ENCODE measurements at regions of chr12 and their contacts with region 1.

Region 1: DNA sequence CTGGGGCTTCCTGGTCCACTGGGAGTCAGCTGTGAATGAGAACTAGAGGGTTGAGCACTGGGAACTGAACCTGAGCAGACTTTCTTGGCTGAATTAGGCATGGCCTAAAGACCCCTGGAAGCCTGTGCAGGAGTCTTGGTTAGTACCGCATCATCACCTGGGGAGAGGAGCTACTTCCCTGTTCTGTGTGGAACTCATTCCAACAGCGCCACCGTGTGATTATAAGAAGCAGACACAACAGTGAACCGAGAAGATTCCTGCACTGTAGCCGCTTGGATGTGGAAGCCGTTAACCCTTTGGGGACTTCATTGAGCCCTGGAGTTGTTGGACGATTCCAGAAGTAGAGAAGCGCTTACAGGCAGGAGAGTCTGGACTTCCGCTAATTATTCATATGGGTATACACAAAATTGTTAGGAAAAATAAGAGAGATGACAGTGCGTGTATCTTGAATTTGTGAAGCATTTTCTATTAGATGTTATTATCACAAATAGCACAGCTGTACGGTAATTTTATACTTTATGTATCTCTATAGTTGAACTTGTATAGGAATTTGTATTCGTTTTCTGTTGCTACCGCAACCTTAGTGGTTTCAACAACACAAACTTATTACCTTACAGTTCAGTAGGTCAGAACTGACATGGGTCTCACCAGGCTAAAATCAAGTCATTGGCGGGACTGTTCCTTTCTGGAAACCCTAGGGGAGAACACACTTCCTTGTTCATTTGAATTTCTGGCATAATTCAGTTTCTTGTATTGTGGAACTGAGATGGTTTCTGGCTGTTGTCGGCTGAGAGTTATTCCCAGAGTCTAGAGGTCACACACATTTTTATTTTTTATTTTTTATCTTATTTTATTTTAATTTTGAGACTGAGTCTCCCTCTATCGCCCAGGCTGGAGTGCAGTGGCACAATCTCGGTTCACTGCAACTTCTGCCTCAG is 100.7 kb downstream of the C2CD5 start:
- DNase-seq: peak; percentile 50
- CTCF ChIP-seq: peak; percentile 84

Region 2: GRCh38 chr12:21697904-21698630 is 745.6 kb before region 1 on chr12:
- in situ Hi-C with region 1: loop called (anchors 25 kb)
- DNase-seq: no peak
- CTCF ChIP-seq: peak; percentile 46

Region 3: DNA sequence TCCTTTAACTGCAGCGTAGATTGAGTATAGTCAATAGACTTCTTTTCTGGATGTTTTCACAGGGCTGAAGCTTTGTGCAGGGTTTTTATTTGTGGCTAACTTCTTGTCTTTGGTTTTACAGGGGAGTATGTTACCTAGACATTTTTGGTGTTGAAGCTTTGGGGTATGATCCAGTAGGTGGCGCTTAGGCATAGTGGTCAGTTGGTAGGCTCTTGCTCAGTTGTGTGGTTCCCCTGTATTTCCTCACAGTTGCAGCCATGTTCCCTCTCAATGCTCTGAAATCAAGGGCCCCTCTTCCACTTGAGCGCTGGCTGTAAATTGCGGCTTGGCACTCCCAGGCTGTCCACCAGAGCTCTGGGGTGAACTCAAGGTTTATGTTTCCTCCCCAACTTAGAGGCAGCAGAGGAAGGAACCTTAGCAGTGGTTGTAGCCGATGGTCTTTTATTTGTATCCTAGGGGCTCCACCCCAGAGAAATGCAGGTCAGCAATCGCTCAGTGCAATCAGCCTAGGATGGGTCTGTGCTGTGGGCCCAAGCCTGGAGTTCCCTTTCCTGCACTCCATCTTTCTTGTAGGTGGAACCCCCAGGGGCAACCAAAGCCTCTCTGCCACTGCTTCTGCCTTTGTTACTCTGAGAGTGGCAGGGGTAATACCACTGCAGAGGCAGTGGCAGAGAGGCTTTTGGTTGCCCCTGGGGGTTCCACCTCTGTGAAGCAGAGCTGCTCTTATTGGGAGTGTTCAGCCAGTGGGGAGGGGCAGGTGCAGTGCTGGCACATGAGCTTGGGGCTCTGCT is 342.5 kb before region 1 on chr12:
- in situ Hi-C with region 1: no loop called
- DNase-seq: peak; percentile 32
- CTCF ChIP-seq: peak; percentile 53